Activated T-helper 1 cell treated with anti-CD3 and anti-CD28 coated beads, Interleukin-12 subunit alpha, Interleukin-12 subunit beta, Interleukin-2, Interleukin-4 antibody, amounts not matched to agents 30 ng/mL and 10 ng/mL and 1 ng/mL, durations not matched to agents 14 hours and 24 hours and 36 hours (primary cell): ENCODE measurements at regions of chr13 and their contacts with region 1.

Region 1: DNA sequence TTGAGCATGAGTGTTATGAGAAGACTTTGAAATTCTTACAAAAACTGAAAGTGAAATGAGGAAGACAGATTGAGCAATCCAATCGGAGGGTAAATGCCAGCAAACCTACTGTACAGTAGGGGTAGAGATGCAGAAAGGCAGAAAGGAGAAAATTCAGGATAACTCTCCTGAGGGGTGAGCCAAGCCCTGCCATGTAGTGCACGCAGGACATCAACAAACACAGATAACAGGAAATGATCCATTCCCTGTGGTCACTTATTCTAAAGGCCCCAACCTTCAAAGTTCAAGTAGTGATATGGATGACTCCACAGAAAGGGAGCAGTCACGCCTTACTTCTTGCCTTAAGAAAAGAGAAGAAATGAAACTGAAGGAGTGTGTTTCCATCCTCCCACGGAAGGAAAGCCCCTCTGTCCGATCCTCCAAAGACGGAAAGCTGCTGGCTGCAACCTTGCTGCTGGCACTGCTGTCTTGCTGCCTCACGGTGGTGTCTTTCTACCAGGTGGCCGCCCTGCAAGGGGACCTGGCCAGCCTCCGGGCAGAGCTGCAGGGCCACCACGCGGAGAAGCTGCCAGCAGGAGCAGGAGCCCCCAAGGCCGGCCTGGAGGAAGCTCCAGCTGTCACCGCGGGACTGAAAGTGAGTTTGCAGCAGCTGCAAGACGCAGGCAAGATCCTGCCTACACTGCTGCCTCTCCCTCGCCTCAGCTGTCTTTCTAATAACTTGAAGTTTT is at the start of gene TNFSF13B:
- DNase-seq: peak; percentile 32
- H3K4me3 Mint-ChIP-seq: peak within 1 kb of the TSS; percentile 85
- H3K27ac Mint-ChIP-seq: peak within 1 kb of the TSS; percentile 87
- H3K4me1 Mint-ChIP-seq: peaks cover 57% of the 10 kb centered on the region
- H3K27me3 Mint-ChIP-seq: no peaks in the 10 kb centered on the region
- total RNA-seq, gene TNFSF13B: 2.9 and 3.4 TPM in 2 replicates

Region 2: GRCh38 chr13:108218044-108218974 is 51.5 kb before region 1 on chr13 and contains the start of gene ABHD13:
- intact Hi-C with region 1: loop called (anchors 1 kb)
- DNase-seq: peak; percentile 89
- H3K4me3 Mint-ChIP-seq: peak within 1 kb of the TSS; percentile 95
- H3K27ac Mint-ChIP-seq: peak within 1 kb of the TSS; percentile 94
- H3K4me1 Mint-ChIP-seq: peaks cover 44% of the 10 kb centered on the region
- H3K27me3 Mint-ChIP-seq: peaks cover 2% of the 10 kb centered on the region
- total RNA-seq, gene ABHD13: 8.0 and 8.5 TPM in 2 replicates

Region 3: DNA sequence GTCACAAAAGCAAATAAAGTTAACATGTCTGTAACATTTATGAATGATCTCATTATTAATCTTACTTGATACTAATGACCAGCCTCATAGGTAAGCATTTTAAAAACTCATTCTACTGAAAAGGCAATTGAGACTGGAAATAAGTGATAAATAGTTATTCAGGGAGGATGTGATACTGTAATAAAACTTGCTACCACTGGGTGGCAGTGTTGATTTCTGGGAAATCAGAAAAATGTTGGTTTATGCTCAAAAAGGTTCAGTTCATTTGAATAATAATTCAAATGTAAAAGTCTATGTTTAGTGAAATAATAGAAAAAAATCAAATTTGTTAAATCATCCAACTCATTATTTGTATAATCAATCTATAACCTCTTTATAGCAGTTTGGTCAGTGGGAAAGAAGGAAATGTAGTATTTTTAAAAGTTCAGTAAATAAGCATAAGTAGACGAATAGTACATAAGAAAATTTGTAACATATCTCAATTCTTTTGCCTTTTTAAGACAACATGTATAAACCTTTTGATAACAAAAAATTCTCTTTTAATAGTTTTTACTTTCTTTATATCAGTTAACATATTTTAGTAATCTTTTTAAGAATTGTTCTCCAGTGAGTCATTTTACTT is 42.0 kb before region 1 on chr13:
- intact Hi-C with region 1: loop called (anchors 1 kb)
- DNase-seq: no peak
- H3K4me3 Mint-ChIP-seq: no peak overlapping the region
- H3K27ac Mint-ChIP-seq: no peak overlapping the region
- H3K4me1 Mint-ChIP-seq: peaks cover 31% of the 10 kb centered on the region
- H3K27me3 Mint-ChIP-seq: no peaks in the 10 kb centered on the region

Region 4: GRCh38 chr13:108249150-108249549 is 20.6 kb before region 1 on chr13:
- intact Hi-C with region 1: loop called (anchors 1 kb)
- DNase-seq: no peak
- H3K4me3 Mint-ChIP-seq: no peak overlapping the region
- H3K27ac Mint-ChIP-seq: no peak overlapping the region
- H3K4me1 Mint-ChIP-seq: peaks cover 12% of the 10 kb centered on the region
- H3K27me3 Mint-ChIP-seq: no peaks in the 10 kb centered on the region

Region 5: DNA sequence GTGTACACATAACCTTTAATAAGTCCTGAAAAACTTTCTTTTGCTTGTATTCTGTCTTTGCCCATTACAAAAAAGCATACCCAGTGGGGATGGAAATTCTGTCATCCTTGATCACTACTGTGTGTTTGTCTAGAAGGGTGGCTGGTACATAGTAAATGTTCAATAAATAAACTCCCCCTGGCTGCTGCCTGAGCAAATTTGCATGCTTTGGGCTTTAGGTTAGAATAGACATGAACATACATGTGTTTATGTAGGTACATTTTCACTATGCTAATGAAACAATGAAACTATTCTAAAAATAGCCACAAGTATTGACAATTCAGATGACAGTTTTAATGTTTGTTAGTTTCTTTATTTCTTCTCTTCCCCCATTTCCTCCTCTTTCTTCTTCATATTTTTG is 35.9 kb after region 1 on chr13:
- intact Hi-C with region 1: loop called (anchors 5 kb)
- DNase-seq: no peak
- H3K4me3 Mint-ChIP-seq: no peak overlapping the region
- H3K27ac Mint-ChIP-seq: no peak overlapping the region
- H3K4me1 Mint-ChIP-seq: peaks cover 12% of the 10 kb centered on the region
- H3K27me3 Mint-ChIP-seq: no peaks in the 10 kb centered on the region

Region 6: DNA sequence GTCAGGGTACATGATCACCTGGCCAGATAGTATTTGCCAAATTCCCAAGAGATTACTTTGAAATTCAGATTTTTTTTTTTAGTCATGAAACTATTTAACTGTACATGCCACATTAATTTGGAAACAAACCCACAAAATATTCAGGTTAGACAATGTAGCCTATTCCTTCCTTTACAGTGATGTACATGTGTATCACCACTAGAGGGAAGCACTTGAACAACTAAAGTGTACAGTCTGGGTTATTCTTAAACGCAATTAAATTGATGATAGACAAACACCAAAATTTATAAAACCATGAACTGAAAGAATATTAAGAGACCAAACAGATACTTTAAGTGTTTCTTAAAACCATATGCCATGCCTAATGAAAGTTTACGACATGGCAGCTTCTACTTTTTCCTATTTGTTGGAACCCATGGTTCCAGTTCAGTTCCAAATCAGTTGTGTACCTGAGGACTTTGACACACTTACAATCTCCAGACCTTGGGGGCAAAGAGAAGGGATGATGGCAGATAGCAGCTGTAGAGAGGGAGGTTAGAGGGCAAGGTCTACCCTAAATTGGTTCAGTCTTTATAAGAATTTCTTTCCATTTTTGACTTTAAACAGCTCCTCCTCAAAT is 52.5 kb after region 1 on chr13:
- intact Hi-C with region 1: loop called (anchors 1 kb)
- DNase-seq: no peak
- H3K4me3 Mint-ChIP-seq: no peak overlapping the region
- H3K27ac Mint-ChIP-seq: no peak overlapping the region
- H3K4me1 Mint-ChIP-seq: no peaks in the 10 kb centered on the region
- H3K27me3 Mint-ChIP-seq: peaks cover 15% of the 10 kb centered on the region

Region 7: GRCh38 chr13:108915634-108916512 is 646.1 kb after region 1 on chr13:
- intact Hi-C with region 1: loop called (anchors 1 kb)
- DNase-seq: peak; percentile 72
- H3K4me3 Mint-ChIP-seq: peak overlapping the region; percentile 80
- H3K27ac Mint-ChIP-seq: peak overlapping the region; percentile 97
- H3K4me1 Mint-ChIP-seq: peaks cover 30% of the 10 kb centered on the region
- H3K27me3 Mint-ChIP-seq: peaks cover 2% of the 10 kb centered on the region